Right ventricle myocardium superior (tissue), 1 donor: ENCODE measurements at regions of chr11 and their contacts with region 1.

Region 1: GRCh38 chr11:68257475-68258362 is 14.1 kb downstream of the C11orf24 start:
- DNase-seq: peak; percentile 99
- ATAC-seq: peak; percentile 93

Region 2: DNA sequence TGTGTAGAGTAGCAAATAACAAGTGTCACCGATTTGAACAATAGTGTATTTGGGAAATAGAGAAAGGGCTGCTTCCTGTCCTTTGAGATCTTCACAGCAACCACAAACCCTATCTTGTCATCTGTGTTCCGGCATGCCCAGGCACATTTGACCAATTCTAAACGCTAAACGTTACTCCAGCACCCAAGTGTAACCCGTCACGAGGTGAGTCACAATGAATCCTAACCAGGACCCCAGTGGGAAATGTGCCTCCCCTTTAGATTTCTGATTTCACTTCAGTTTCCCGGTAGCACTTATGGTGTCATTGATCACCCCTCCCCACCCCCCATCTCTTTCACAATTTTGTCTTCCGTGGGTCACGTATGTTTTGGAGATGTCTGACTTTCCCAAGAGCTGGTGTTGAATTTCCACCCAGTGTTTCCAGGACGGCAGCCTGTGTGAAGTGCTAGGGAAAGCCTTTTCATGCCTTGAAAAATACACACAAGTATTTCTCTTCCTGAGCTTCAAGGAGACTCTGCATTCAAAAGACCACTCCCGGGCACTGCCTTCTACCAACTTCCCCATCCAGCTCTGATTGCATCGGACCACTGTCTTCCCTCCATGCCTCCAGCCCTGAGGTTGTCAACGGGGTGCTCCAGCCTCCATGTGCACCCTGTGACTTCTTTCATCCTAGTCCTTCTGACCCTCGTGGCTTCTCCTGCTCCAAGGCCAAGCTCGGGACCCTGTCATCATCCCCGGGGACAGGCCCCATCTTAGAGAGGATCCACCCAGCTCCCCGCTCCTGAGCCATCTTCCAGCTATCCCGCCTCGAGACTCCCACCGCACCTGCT is 24.6 kb after region 1 on chr11:
- intact Hi-C with region 1: no loop called
- DNase-seq: no peak
- ATAC-seq: no peak

Region 3: GRCh38 chr11:68297812-68298658 is 40.3 kb after region 1 on chr11:
- intact Hi-C with region 1: loop called (anchors 2 kb)
- DNase-seq: peak; percentile 88
- ATAC-seq: peak; percentile 98

Region 4: GRCh38 chr11:68398995-68399851 is 141.5 kb after region 1 on chr11:
- intact Hi-C with region 1: loop called (anchors 5 kb)
- DNase-seq: peak; percentile 86
- ATAC-seq: peak; percentile 90

Region 5: GRCh38 chr11:68447015-68447801 is 189.5 kb after region 1 on chr11:
- intact Hi-C with region 1: loop called (anchors 5 kb)
- DNase-seq: peak; percentile 87
- ATAC-seq: peak; percentile 93